Heart left ventricle (tissue), 16 donors: ENCODE measurements at regions of chr5 and their contacts with region 1.

Region 1: DNA sequence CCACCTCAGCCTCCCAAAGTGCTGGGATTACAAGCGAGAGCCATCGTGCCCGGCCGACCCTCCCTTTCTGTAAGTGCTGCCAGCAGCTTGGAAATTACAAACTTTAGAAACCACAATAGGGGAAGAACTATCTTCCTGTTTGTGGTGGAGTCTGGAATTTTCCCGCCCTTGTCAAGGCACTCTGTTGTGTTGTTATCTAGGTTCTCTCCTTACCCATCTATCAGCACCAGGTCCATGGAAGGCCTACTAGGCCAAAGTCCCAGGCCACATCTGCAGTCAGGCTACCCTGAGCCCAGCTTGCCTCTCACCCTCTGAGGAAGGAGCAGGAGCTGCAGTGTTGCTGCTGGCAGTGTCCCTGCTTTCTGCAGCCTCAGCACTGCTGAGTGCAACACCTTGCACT is 214.9 kb downstream of the MCTP1 start:
- DNase-seq: no peak
- ATAC-seq: peak; percentile 34 to 53 (median 39)
- H3K4me3 ChIP-seq: no peak overlapping the region
- H3K27ac ChIP-seq: peak overlapping the region in 7 of 12 donors; percentile 3 to 65 (median 39)
- H3K4me1 ChIP-seq: peaks cover 0 to 43% (median 5%) of the 10 kb centered on the region in 12 donors
- H3K27me3 ChIP-seq: no peaks in the 10 kb centered on the region
- CTCF ChIP-seq: no peak
- POLR2A ChIP-seq: no peak

Region 2: GRCh38 chr5:94976853-94977252 is 93.1 kb before region 1 on chr5:
- intact Hi-C with region 1: loop called in 1 of 10 experiments (anchors 10 kb)
- DNase-seq: no peak
- ATAC-seq: no peak
- H3K4me3 ChIP-seq: no peak overlapping the region
- H3K27ac ChIP-seq: no peak overlapping the region
- H3K4me1 ChIP-seq: no peaks in the 10 kb centered on the region
- H3K27me3 ChIP-seq: no peaks in the 10 kb centered on the region
- CTCF ChIP-seq: no peak
- POLR2A ChIP-seq: no peak